ENCODE measurements at regions of chr19 and their contacts with region 1.

Region 1: GRCh38 chr19:49391581-49392399 is 3.7 kb downstream of the KASH5 start:
- DNase-seq: peak; percentile 64 to 83
- ATAC-seq: peak; percentile 96

Region 2: DNA sequence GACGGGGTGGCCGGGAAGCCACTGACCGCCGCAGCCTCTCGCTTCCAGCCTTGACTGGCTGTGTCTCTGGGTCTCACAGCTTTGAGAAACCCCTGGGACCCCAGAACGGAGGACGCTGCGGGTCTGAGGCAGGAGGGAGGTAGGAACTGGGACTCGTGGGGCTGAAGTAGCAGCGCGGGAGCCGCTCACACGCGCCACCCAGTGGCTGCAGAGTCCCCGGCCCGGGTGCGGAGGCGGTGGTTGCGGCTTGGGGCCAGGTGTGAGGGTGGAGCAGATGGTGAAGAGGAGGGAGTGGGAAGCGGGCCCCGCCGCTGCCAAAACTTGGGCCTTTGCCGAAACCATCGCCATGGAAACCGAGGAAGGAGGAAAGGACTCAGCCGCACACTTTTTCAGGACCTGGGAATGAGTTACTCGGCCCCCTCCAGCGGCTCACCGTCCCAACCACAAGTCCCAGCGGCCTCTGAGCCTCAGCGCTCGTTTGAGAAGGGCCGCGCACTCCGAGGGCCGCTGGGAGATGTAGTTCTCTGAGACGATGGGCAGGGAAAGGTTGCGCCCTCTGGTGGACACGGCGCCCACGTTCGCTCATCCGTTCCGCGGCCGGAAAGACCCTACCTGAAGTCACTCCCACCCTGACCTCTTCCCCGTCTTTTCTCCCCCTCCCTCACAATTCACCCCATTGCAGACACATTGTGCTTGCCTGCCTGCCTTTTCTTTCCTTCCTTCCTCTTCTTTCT is 51.7 kb after region 1 on chr19:
- intact Hi-C with region 1: loop called in 1 of 2 experiments (anchors 5 kb)
- DNase-seq: peak; percentile 93 to 96
- ATAC-seq: peak; percentile 87